Naive thymus-derived CD4-positive, alpha-beta T cell (primary cell): ENCODE measurements at regions of chr11 and their contacts with region 1.

Region 1: GRCh38 chr11:62880803-62881578 is at the start of gene SLC3A2:
- DNase-seq: peak; percentile 80 to 90 (median 87)
- ATAC-seq: peak; percentile 88
- H3K4me3 ChIP-seq: peak within 1 kb of the TSS; percentile 97
- H3K4me3 Mint-ChIP-seq: peak within 1 kb of the TSS; percentile 98 to 100 (median 100)
- H3K27ac ChIP-seq: peak within 1 kb of the TSS; percentile 94
- H3K27ac Mint-ChIP-seq: peak within 1 kb of the TSS; percentile 98 to 100 (median 99)
- H3K4me1 ChIP-seq: peaks cover 34 to 35% of the 10 kb centered on the region in 2 donors
- H3K4me1 Mint-ChIP-seq: peaks cover 34 to 60% (median 53%) of the 10 kb centered on the region in 7 donors
- H3K27me3 ChIP-seq: no peaks in the 10 kb centered on the region
- H3K27me3 Mint-ChIP-seq: peaks cover 0 to 4% (median 0%) of the 10 kb centered on the region in 5 donors
- total RNA-seq, gene SLC3A2: 159 to 239 (median 218) TPM

Region 2: GRCh38 chr11:62123669-62124185 is 757.3 kb before region 1 on chr11 and contains the start of gene INCENP:
- CTCF ChIA-PET with region 1: no interaction called
- POLR2A ChIA-PET with region 1: no interaction called
- intact Hi-C with region 1: loop called (anchors 2 to 5 kb)
- DNase-seq: peak; percentile 75 to 97 (median 95)
- ATAC-seq: peak; percentile 100
- H3K4me3 ChIP-seq: peak within 1 kb of the TSS; percentile 87
- H3K4me3 Mint-ChIP-seq: peak within 1 kb of the TSS; percentile 89 to 95 (median 94)
- H3K27ac ChIP-seq: peak within 1 kb of the TSS; percentile 81
- H3K27ac Mint-ChIP-seq: peak within 1 kb of the TSS; percentile 53 to 95 (median 91)
- H3K4me1 ChIP-seq: peaks cover 6 to 9% of the 10 kb centered on the region in 2 donors
- H3K4me1 Mint-ChIP-seq: peaks cover 22 to 40% (median 28%) of the 10 kb centered on the region in 7 donors
- H3K27me3 ChIP-seq: no peaks in the 10 kb centered on the region
- H3K27me3 Mint-ChIP-seq: peaks cover 0 to 15% (median 0%) of the 10 kb centered on the region in 5 donors
- total RNA-seq, gene INCENP: 18.6 to 124 (median 25.6) TPM

Region 3: DNA sequence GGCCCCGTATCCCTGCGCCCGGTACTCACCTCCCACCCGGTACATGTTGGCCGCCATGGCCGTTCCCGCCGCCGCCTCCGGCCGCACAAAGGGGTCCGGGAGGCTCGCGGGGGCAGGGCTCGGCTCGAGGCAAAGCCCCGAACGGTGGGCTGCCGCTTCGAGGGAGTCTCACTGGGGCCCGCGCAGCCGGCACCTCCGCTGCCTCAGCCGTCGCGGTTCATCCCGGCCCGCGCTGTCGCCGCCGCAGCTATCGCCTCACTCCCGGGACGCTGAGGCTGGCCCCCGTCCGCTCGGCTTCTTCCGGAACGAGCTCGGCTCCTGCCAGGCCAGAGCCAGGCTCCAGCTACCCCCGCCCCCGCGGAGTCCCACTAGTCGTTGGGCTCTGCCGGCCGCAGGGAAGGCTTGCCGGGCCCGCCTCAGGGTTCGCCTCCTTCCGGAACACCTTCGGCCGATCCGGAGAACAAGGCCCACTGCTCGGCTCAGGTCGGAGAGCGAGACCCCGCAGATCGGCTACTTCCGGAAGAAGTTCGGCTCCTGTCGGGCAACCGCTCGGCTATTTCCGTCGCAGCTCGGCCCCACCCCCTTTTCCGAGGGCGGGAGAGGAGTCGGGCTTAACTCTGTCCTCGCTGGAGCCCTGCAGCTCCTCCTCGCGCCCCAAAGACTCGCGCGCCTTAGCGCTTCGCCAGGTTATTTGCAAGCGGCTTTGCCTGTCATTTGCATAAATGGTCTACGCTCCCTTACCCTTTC is 279.4 kb before region 1 on chr11 and contains the start of gene MTA2:
- CTCF ChIA-PET with region 1: no interaction called
- POLR2A ChIA-PET with region 1: interaction called, 9 read pairs
- intact Hi-C with region 1: loop called (anchors 1 kb)
- DNase-seq: peak; percentile 98 to 100 (median 100)
- ATAC-seq: peak; percentile 85
- H3K4me3 ChIP-seq: peak within 1 kb of the TSS; percentile 71
- H3K4me3 Mint-ChIP-seq: peak within 1 kb of the TSS; percentile 85 to 99 (median 94)
- H3K27ac ChIP-seq: peak within 1 kb of the TSS; percentile 98
- H3K27ac Mint-ChIP-seq: peak within 1 kb of the TSS; percentile 90 to 98 (median 97)
- H3K4me1 ChIP-seq: peaks cover 16 to 23% of the 10 kb centered on the region in 2 donors
- H3K4me1 Mint-ChIP-seq: peaks cover 43 to 64% (median 54%) of the 10 kb centered on the region in 7 donors
- H3K27me3 ChIP-seq: no peaks in the 10 kb centered on the region
- H3K27me3 Mint-ChIP-seq: no peaks in the 10 kb centered on the region
- total RNA-seq, gene MTA2: 134 to 238 (median 199) TPM

Region 4: GRCh38 chr11:62726915-62727763 is 153.9 kb before region 1 on chr11 and contains the start of gene HNRNPUL2:
- CTCF ChIA-PET with region 1: no interaction called
- POLR2A ChIA-PET with region 1: interaction called, 19 read pairs
- intact Hi-C with region 1: loop called (anchors 1 kb)
- DNase-seq: peak; percentile 96 to 100 (median 99)
- ATAC-seq: peak; percentile 89
- H3K4me3 ChIP-seq: peak within 1 kb of the TSS; percentile 87
- H3K4me3 Mint-ChIP-seq: peak within 1 kb of the TSS; percentile 91 to 99 (median 96)
- H3K27ac ChIP-seq: peak within 1 kb of the TSS; percentile 92
- H3K27ac Mint-ChIP-seq: peak within 1 kb of the TSS; percentile 95 to 100 (median 98)
- H3K4me1 ChIP-seq: peaks cover 36 to 38% of the 10 kb centered on the region in 2 donors
- H3K4me1 Mint-ChIP-seq: peaks cover 23 to 65% (median 58%) of the 10 kb centered on the region in 7 donors
- H3K27me3 ChIP-seq: no peaks in the 10 kb centered on the region
- H3K27me3 Mint-ChIP-seq: peaks cover 0 to 2% (median 0%) of the 10 kb centered on the region in 5 donors
- total RNA-seq, gene HNRNPUL2: 43.4 to 77.5 (median 65.3) TPM

Region 5: GRCh38 chr11:62787005-62787759 is 93.8 kb before region 1 on chr11 and contains the start of gene TMEM179B:
- CTCF ChIA-PET with region 1: interaction called, 15 read pairs
- POLR2A ChIA-PET with region 1: interaction called, 30 read pairs
- intact Hi-C with region 1: loop called (anchors 1 kb)
- DNase-seq: peak; percentile 87 to 98 (median 95)
- ATAC-seq: peak; percentile 83
- H3K4me3 ChIP-seq: peak within 1 kb of the TSS; percentile 82
- H3K4me3 Mint-ChIP-seq: peak within 1 kb of the TSS; percentile 93 to 97 (median 96)
- H3K27ac ChIP-seq: peak within 1 kb of the TSS; percentile 93
- H3K27ac Mint-ChIP-seq: peak within 1 kb of the TSS; percentile 91 to 99 (median 96)
- H3K4me1 ChIP-seq: peaks cover 32 to 38% of the 10 kb centered on the region in 2 donors
- H3K4me1 Mint-ChIP-seq: peaks cover 22 to 59% (median 42%) of the 10 kb centered on the region in 7 donors
- H3K27me3 ChIP-seq: no peaks in the 10 kb centered on the region
- H3K27me3 Mint-ChIP-seq: no peaks in the 10 kb centered on the region
- total RNA-seq, gene TMEM179B: 23.2 to 72.3 (median 50.9) TPM

Region 6: GRCh38 chr11:62855571-62856332 is 25.2 kb before region 1 on chr11:
- CTCF ChIA-PET with region 1: interaction called, 5 read pairs
- POLR2A ChIA-PET with region 1: interaction called, 99 read pairs
- intact Hi-C with region 1: loop called (anchors 1 kb)
- DNase-seq: peak; percentile 96 to 100 (median 99)
- ATAC-seq: peak; percentile 97
- H3K4me3 ChIP-seq: peak overlapping the region; percentile 97
- H3K4me3 Mint-ChIP-seq: peak overlapping the region; percentile 93 to 100 (median 98)
- H3K27ac ChIP-seq: peak overlapping the region; percentile 85
- H3K27ac Mint-ChIP-seq: peak overlapping the region; percentile 86 to 98 (median 94)
- H3K4me1 ChIP-seq: peaks cover 33 to 39% of the 10 kb centered on the region in 2 donors
- H3K4me1 Mint-ChIP-seq: peaks cover 34 to 77% (median 46%) of the 10 kb centered on the region in 7 donors
- H3K27me3 ChIP-seq: no peaks in the 10 kb centered on the region
- H3K27me3 Mint-ChIP-seq: peaks cover 0 to 6% (median 0%) of the 10 kb centered on the region in 5 donors